Activated naive CD8-positive, alpha-beta T cell treated with anti-CD3 and anti-CD28 coated beads, Interleukin-2, amount 10 ng/mL, durations not matched to agents 7 days and 5 days (primary cell): ENCODE measurements at regions of chr18 and their contacts with region 1.

Region 1: DNA sequence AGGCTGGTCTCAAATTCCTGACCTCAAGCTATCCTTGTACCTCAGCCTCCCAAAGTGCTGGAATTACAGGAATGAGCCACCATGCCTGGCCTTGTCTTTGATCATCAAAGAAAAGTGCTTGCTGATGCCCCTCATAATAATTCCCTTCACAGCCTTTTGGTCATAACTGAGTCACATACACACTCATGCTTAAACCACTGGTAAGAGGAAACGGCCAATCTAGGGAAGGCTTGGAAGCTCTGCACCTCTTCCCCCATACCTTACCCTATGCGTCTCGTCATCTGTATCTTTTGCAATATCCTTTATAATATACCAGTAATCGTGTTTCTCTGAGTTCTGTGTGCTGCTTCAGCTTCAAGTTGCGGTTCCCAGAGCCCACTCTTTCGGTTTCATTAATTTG is 4.8 kb upstream of the RNF138 start:
- DNase-seq: no peak
- ATAC-seq: no peak
- H3K4me3 Mint-ChIP-seq: no peak overlapping the region
- H3K27ac Mint-ChIP-seq: no peak overlapping the region
- H3K4me1 Mint-ChIP-seq: peaks cover 35% of the 10 kb centered on the region
- H3K27me3 Mint-ChIP-seq: no peaks in the 10 kb centered on the region

Region 2: GRCh38 chr18:31942999-31943865 is 143.6 kb before region 1 on chr18 and contains the start of gene TRAPPC8:
- POLR2A ChIA-PET with region 1: interaction called, 26 read pairs
- DNase-seq: peak; percentile 88
- ATAC-seq: peak; percentile 93
- H3K4me3 Mint-ChIP-seq: peak within 1 kb of the TSS; percentile 99
- H3K27ac Mint-ChIP-seq: peak within 1 kb of the TSS; percentile 99
- H3K4me1 Mint-ChIP-seq: peaks cover 33% of the 10 kb centered on the region
- H3K27me3 Mint-ChIP-seq: no peaks in the 10 kb centered on the region
- total RNA-seq, gene TRAPPC8: 39.6 to 46.1 TPM

Region 3: DNA sequence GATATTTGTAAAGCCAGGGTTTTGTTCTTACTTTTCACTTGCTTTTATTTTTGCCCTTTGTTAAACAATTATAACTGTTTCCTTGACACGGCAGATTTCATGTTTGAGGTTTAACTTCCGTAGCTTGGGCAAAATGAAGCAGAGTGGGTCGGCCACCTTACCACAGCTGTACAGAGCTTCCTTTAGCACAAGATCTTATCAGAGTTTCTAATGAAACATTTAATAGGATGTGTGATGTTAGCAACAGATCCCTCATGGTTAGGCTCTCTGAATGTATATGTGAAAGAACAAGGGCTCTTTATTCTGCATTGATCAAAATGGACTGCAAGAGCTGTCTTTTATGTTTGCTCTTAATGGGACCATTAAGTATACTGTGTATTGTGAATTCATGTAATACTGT is 45.9 kb before region 1 on chr18:
- POLR2A ChIA-PET with region 1: interaction called, 20 read pairs
- DNase-seq: no peak
- ATAC-seq: peak; percentile 95
- H3K4me3 Mint-ChIP-seq: peak overlapping the region; percentile 85
- H3K27ac Mint-ChIP-seq: peak overlapping the region; percentile 94
- H3K4me1 Mint-ChIP-seq: peaks cover 49% of the 10 kb centered on the region
- H3K27me3 Mint-ChIP-seq: no peaks in the 10 kb centered on the region

Region 4: GRCh38 chr18:32072321-32072720 is 14.5 kb before region 1 on chr18:
- POLR2A ChIA-PET with region 1: interaction called, 10 read pairs
- DNase-seq: no peak
- ATAC-seq: peak; percentile 58
- H3K4me3 Mint-ChIP-seq: no peak overlapping the region
- H3K27ac Mint-ChIP-seq: no peak overlapping the region
- H3K4me1 Mint-ChIP-seq: peaks cover 15% of the 10 kb centered on the region
- H3K27me3 Mint-ChIP-seq: no peaks in the 10 kb centered on the region